Naive thymus-derived CD4-positive, alpha-beta T cell (primary cell): ENCODE measurements at regions of chr4 and their contacts with region 1.

Region 1: DNA sequence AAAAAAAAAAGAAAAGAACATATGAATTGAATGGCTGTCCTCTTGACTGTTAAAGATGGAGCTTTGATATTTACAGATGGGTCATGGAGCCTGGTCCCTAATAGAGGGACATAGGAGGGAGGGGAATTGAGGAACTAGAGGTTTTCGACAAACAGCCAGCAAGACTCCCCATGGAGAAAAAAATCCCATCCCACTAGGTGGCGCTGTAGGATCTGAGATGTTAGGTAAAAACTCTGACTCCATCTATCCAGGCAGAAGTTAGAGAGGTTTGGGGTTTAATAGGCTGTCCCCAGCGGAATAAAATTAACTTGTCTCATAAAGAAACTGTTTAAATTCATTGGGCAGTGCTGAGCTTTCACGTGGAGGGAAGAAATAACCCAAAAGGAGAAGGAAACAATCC is 45.9 kb downstream of the HMGB2 start:
- DNase-seq: peak; percentile 22 to 68 (median 44)
- ATAC-seq: peak; percentile 63
- H3K4me3 ChIP-seq: no peak overlapping the region
- H3K4me3 Mint-ChIP-seq: peak overlapping the region in 7 of 10 donors; percentile 15 to 83 (median 55)
- H3K27ac ChIP-seq: no peak overlapping the region
- H3K27ac Mint-ChIP-seq: peak overlapping the region in 5 of 9 donors; percentile 5 to 81 (median 23)
- H3K4me1 ChIP-seq: peaks cover 0 to 6% of the 10 kb centered on the region in 2 donors
- H3K4me1 Mint-ChIP-seq: peaks cover 9 to 22% (median 16%) of the 10 kb centered on the region in 7 donors
- H3K27me3 ChIP-seq: no peaks in the 10 kb centered on the region
- H3K27me3 Mint-ChIP-seq: no peaks in the 10 kb centered on the region

Region 2: GRCh38 chr4:173494013-173494970 is 206.0 kb after region 1 on chr4:
- CTCF ChIA-PET with region 1: interaction called, 7 read pairs
- POLR2A ChIA-PET with region 1: no interaction called
- intact Hi-C with region 1: loop called (anchors 1 kb)
- DNase-seq: peak in 8 of 9 donors; percentile 43 to 71 (median 56)
- ATAC-seq: peak; percentile 96
- H3K4me3 ChIP-seq: peak overlapping the region; percentile 44
- H3K4me3 Mint-ChIP-seq: peak overlapping the region; percentile 74 to 92 (median 85)
- H3K27ac ChIP-seq: no peak overlapping the region
- H3K27ac Mint-ChIP-seq: peak overlapping the region in 1 of 9 donors; percentile 50
- H3K4me1 ChIP-seq: peaks cover 3 to 9% of the 10 kb centered on the region in 2 donors
- H3K4me1 Mint-ChIP-seq: peaks cover 9 to 35% (median 15%) of the 10 kb centered on the region in 7 donors
- H3K27me3 ChIP-seq: no peaks in the 10 kb centered on the region
- H3K27me3 Mint-ChIP-seq: peaks cover 40 to 71% (median 50%) of the 10 kb centered on the region in 5 donors

Region 3: GRCh38 chr4:173845580-173845979 is 557.3 kb after region 1 on chr4:
- CTCF ChIA-PET with region 1: no interaction called
- POLR2A ChIA-PET with region 1: no interaction called
- intact Hi-C with region 1: no loop called
- DNase-seq: no peak
- ATAC-seq: no peak
- H3K4me3 ChIP-seq: no peak overlapping the region
- H3K4me3 Mint-ChIP-seq: no peak overlapping the region
- H3K27ac ChIP-seq: no peak overlapping the region
- H3K27ac Mint-ChIP-seq: no peak overlapping the region
- H3K4me1 ChIP-seq: no peaks in the 10 kb centered on the region
- H3K4me1 Mint-ChIP-seq: no peaks in the 10 kb centered on the region
- H3K27me3 ChIP-seq: no peaks in the 10 kb centered on the region
- H3K27me3 Mint-ChIP-seq: peaks cover 0 to 5% (median 0%) of the 10 kb centered on the region in 5 donors